ENCODE measurements at regions of chr1 and their contacts with region 1.

Region 1: DNA sequence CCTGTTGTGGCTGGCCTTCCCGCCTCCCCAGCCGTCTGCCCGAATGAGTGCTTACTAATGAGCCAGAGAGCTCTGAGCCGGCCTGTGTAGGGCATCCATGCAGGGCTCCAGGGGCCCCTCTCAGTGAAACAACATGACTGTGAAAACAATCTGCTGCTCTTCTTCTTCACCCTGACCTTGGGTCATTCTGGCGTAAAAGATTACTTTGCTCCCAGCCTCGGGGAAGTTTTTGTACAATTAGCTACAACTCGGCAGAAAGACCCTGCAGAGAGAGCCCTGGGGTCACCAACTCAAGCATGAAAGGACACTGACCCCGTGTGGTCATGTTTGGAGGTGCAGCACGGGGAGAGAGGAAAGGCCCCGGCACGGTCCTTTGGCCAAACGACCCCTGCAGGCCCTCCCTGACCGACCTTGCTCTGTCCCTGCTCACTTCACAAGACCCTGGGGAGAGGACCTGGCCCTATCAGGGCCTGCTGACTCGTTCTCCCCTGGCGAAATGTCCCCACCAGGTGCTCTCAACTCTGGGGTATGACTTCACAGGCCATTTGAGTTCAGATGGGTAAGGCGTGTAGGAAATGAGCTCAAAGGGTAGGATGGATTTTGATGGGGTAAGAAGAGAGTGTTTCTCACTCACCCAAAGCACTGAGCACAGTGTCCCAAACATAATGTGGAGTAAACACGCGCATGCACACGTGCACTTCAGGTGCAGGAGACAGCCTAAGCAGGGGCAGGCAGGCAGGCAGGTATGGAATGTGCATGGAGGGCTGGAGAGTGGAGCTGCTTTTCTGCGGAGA is 22.9 kb upstream of the FAM20B start:
- DNase-seq: peak in 1 of 2 donors; percentile 42
- ATAC-seq: peak; percentile 79 to 80
- H3K4me3 ChIP-seq: peak overlapping the region in 1 of 4 donors; percentile 42
- H3K27ac ChIP-seq: no peak overlapping the region
- H3K4me1 ChIP-seq: no peaks in the 10 kb centered on the region
- H3K27me3 ChIP-seq: no peaks in the 10 kb centered on the region
- CTCF ChIP-seq: peak; percentile 91 to 96 (median 95)
- POLR2A ChIP-seq: no peak

Region 2: GRCh38 chr1:178532392-178532791 is 470.4 kb before region 1 on chr1:
- in situ Hi-C with region 1: loop called (anchors 5 to 25 kb)
- intact Hi-C with region 1: loop called (anchors 2 kb)
- DNase-seq: peak; percentile 54 to 72
- ATAC-seq: peak; percentile 35 to 60
- H3K4me3 ChIP-seq: no peak overlapping the region
- H3K27ac ChIP-seq: no peak overlapping the region
- H3K4me1 ChIP-seq: peaks cover 4 to 18% of the 10 kb centered on the region in 2 donors
- H3K27me3 ChIP-seq: no peaks in the 10 kb centered on the region
- CTCF ChIP-seq: peak; percentile 76 to 94 (median 88)
- POLR2A ChIP-seq: no peak

Region 3: DNA sequence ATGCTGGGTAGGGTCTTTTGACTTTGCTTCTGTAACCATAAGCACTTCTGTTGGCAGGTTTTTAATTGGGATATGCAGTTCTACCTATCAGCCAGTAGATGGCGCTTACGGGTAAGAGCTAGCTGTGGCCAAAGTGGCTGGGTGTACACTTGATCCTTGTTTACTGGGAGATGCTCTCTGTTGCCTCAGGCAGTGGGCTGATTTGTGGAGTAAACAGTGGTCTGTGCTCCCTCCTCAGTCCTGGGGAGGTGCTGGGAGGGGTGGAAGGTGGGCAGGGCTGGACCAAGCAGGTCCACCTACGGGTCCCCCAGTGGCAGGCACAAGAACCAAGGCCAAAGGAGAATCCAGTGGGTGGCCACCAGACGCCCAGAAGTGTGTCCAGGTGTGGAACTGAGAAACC is 234.3 kb before region 1 on chr1:
- in situ Hi-C with region 1: loop called (anchors 10 kb)
- intact Hi-C with region 1: no loop called
- DNase-seq: no peak
- ATAC-seq: peak; percentile 42 to 64
- H3K4me3 ChIP-seq: no peak overlapping the region
- H3K27ac ChIP-seq: no peak overlapping the region
- H3K4me1 ChIP-seq: no peaks in the 10 kb centered on the region
- H3K27me3 ChIP-seq: no peaks in the 10 kb centered on the region
- CTCF ChIP-seq: peak; percentile 49 to 81 (median 70)
- POLR2A ChIP-seq: no peak

Region 4: GRCh38 chr1:178810585-178810984 is 192.2 kb before region 1 on chr1:
- in situ Hi-C with region 1: loop called in 2 of 4 experiments (anchors 5 kb)
- intact Hi-C with region 1: loop called (anchors 2 kb)
- DNase-seq: no peak
- ATAC-seq: no peak
- H3K4me3 ChIP-seq: no peak overlapping the region
- H3K27ac ChIP-seq: no peak overlapping the region
- H3K4me1 ChIP-seq: no peaks in the 10 kb centered on the region
- H3K27me3 ChIP-seq: no peaks in the 10 kb centered on the region
- CTCF ChIP-seq: no peak
- POLR2A ChIP-seq: no peak

Region 5: GRCh38 chr1:179137623-179138255 is 135.0 kb after region 1 on chr1:
- in situ Hi-C with region 1: no loop called
- intact Hi-C with region 1: no loop called
- DNase-seq: peak in 1 of 2 donors; percentile 68
- ATAC-seq: peak; percentile 78 to 98
- H3K4me3 ChIP-seq: no peak overlapping the region
- H3K27ac ChIP-seq: peak overlapping the region in 1 of 4 donors; percentile 15
- H3K4me1 ChIP-seq: peaks cover under 1 to 6% of the 10 kb centered on the region in 2 donors
- H3K27me3 ChIP-seq: no peaks in the 10 kb centered on the region
- CTCF ChIP-seq: no peak
- POLR2A ChIP-seq: no peak

Region 6: DNA sequence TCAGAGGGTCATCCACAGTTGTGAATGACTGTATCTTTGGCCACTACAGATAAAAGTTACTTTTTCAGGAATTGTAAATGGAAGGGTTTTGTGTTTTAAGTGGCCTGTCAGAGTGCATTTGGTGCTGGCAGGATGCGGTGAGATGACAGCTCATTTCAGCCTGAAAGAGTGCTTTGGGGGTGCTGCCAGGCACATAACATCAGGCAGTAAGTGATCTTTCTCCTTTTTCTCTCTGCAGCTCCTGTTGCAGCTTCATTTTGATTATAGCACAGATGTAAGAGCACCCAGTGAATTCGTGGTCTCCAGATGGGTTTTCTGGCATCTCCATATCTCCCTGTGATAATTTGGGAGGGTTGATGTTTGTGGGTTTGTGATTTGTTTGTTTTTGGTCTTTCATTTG is 725.5 kb after region 1 on chr1:
- in situ Hi-C with region 1: no loop called
- intact Hi-C with region 1: no loop called
- DNase-seq: no peak
- ATAC-seq: no peak
- H3K4me3 ChIP-seq: no peak overlapping the region
- H3K27ac ChIP-seq: no peak overlapping the region
- H3K4me1 ChIP-seq: no peaks in the 10 kb centered on the region
- H3K27me3 ChIP-seq: no peaks in the 10 kb centered on the region
- CTCF ChIP-seq: no peak
- POLR2A ChIP-seq: no peak

Measured in gastrocnemius medialis (tissue), 4 donors.